Calu3 (cell line): ENCODE measurements at regions of chr20 and their contacts with region 1.

Region 1: DNA sequence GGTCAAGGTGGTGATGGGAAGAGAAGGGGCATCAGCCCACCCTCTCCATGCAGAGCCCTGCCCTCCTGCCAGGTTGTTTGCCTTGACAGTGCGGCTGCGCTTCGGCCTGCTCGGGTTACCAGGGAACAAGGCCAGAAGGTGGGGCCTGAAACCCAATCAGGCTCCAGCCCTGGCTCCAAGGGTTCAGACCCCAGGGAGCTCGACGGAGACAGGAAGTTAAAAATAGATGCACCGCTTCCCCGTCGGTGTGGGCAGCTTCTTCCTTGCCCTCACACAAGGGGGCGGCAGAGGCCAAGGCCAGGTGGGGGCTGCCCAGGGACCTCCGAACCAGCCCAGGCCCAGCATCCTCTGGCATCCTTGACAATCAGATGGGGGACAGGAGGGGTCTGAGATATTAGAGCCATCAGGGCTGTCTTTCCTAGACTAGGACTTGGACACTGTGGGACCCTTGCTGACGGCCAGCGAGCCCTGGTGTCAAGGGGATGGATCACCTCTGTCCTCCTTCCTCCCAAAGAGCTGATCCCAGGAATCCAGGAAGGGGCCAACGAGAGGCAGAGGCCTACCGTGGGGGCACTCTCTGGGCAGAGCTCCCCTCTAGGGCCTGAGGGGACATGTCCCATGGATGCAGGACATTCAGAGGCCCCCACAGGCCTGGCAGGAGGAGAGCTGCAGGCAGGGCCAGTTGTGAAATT is 65.2 kb downstream of the RIPOR3 start:
- DNase-seq: peak; percentile 91
- H3K4me3 Mint-ChIP-seq: no peak overlapping the region
- H3K27ac Mint-ChIP-seq: peak overlapping the region; percentile 72
- H3K4me1 Mint-ChIP-seq: peaks cover 44% of the 10 kb centered on the region
- H3K27me3 Mint-ChIP-seq: no peaks in the 10 kb centered on the region
- CTCF ChIP-seq: peak; percentile 97

Region 2: GRCh38 chr20:50415516-50416113 is 210.5 kb before region 1 on chr20:
- CTCF ChIA-PET with region 1: no interaction called
- intact Hi-C with region 1: no loop called
- DNase-seq: peak; percentile 99
- H3K4me3 Mint-ChIP-seq: peak overlapping the region; percentile 29
- H3K27ac Mint-ChIP-seq: peak overlapping the region; percentile 93
- H3K4me1 Mint-ChIP-seq: peaks cover 55% of the 10 kb centered on the region
- H3K27me3 Mint-ChIP-seq: no peaks in the 10 kb centered on the region
- CTCF ChIP-seq: no peak

Region 3: DNA sequence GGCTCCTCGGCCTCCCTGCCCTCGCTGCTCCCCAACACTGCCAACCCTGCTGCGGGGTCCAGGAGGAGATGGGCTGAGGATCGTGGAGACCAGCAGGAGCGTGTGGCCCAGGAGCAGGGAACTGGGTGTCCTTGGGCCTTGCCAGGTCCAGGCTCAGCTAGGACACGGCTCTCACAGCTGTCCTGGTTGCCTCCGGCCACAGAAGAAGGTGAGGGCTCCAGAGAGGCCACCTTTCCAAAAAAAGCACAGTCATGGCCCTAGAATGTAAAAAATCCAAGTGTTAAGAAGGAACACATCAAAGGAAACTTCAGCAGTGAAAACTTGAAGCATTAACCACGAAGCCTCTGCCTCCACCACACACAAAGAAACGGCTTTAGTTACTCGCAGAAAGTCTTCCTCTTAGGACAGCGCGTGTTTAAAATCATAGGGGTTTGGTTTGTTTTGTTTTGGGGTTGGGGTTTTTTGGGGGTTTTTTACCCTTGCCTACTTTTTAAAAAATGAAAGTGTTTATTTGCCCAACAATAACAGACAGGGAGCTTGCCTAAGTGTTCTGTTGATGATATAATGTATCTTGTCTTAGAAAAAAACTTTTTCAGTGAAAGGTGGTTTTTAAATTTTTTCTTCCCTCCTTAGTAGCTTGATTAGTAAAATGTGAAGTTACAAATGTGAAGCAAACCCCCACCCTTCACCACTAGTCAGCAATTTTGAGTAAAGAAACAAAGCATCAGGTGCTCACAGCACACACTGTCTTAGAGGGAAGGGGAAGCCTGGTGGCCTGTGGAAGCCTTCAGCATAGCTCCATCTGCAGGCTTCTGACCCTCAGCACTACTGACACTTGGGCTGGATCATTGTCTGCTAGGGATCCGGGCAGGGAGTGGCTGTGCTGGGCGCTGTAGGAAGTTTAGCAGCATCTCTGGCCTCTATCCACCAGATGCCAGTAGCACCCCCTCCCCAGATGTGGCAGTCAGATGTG is 56.0 kb before region 1 on chr20:
- CTCF ChIA-PET with region 1: no interaction called
- intact Hi-C with region 1: no loop called
- DNase-seq: no peak
- H3K4me3 Mint-ChIP-seq: no peak overlapping the region
- H3K27ac Mint-ChIP-seq: no peak overlapping the region
- H3K4me1 Mint-ChIP-seq: peaks cover 13% of the 10 kb centered on the region
- H3K27me3 Mint-ChIP-seq: no peaks in the 10 kb centered on the region
- CTCF ChIP-seq: no peak

Region 4: DNA sequence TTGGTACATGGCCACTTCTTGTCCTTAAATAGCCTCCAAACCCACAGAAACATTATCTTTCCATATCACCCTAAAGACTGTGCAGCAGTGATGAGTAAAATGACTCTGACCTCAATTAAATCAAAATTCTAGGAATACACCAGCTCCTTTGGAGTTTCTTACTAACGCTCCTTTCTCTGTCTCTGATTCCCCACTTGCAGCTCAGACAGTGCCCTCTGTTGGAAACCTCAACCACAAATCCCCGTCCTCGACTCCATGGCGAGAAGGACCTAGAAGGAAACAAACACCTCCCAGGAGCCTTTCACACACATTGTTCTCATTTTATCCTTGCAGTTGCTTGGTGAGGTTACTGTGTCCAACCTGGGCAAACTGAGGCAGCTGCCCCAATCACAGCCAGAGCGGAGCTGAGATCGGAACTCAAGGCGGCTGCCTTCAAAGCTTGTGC is 87.5 kb after region 1 on chr20:
- CTCF ChIA-PET with region 1: interaction called, 14 read pairs
- intact Hi-C with region 1: no loop called
- DNase-seq: peak; percentile 59
- H3K4me3 Mint-ChIP-seq: no peak overlapping the region
- H3K27ac Mint-ChIP-seq: no peak overlapping the region
- H3K4me1 Mint-ChIP-seq: peaks cover 55% of the 10 kb centered on the region
- H3K27me3 Mint-ChIP-seq: no peaks in the 10 kb centered on the region
- CTCF ChIP-seq: peak; percentile 38

Region 5: GRCh38 chr20:50744143-50744792 is 118.1 kb after region 1 on chr20:
- CTCF ChIA-PET with region 1: interaction called, 38 read pairs
- intact Hi-C with region 1: loop called (anchors 5 kb)
- DNase-seq: peak; percentile 73
- H3K4me3 Mint-ChIP-seq: peak overlapping the region; percentile 63
- H3K27ac Mint-ChIP-seq: peak overlapping the region; percentile 90
- H3K4me1 Mint-ChIP-seq: peaks cover 88% of the 10 kb centered on the region
- H3K27me3 Mint-ChIP-seq: no peaks in the 10 kb centered on the region
- CTCF ChIP-seq: no peak

Region 6: DNA sequence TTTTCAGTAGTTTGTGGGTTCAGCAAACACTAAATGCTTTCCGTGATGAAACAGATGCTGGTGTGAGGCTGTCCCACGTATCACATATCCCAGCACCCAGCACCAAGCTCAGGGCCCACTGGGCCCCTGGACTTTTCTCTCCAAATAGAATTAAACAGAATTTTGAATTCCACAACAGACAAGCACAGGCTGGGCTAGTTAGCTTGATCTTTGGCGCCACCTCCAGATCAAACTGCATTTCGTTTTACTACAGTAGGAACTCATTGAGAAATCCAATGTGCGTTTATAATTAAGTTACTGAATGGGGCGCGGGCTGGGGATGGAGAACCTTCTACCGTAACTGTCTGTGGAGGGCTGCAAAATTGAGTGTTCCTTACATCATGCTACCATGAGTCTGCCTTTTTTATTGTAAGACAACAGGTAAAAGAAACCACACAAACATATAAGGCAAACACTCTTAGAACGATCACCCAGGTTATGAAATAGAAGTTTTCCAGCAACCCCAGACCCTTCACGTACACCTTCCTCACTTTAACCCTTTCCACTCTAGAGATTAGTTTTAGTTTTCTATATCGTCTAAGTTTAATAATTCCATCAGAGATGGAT is 1457.6 kb after region 1 on chr20:
- CTCF ChIA-PET with region 1: no interaction called
- intact Hi-C with region 1: no loop called
- DNase-seq: peak; percentile 80
- H3K4me3 Mint-ChIP-seq: no peak overlapping the region
- H3K27ac Mint-ChIP-seq: no peak overlapping the region
- H3K4me1 Mint-ChIP-seq: no peaks in the 10 kb centered on the region
- H3K27me3 Mint-ChIP-seq: no peaks in the 10 kb centered on the region
- CTCF ChIP-seq: peak; percentile 88